ENCODE measurements at regions of chr17 and their contacts with region 1.

Region 1: GRCh38 chr17:29148790-29149430 is 31.3 kb downstream of the MYO18A start:
- DNase-seq: peak; percentile 96 to 99
- H3K4me3 ChIP-seq: peak overlapping the region; percentile 47
- H3K4me3 Mint-ChIP-seq: peak overlapping the region; percentile 69
- H3K27ac Mint-ChIP-seq: peak overlapping the region; percentile 66
- H3K4me1 ChIP-seq: peaks cover 43% of the 10 kb centered on the region
- H3K4me1 Mint-ChIP-seq: peaks cover 37% of the 10 kb centered on the region
- H3K27me3 ChIP-seq: no peaks in the 10 kb centered on the region
- H3K27me3 Mint-ChIP-seq: no peaks in the 10 kb centered on the region
- CTCF ChIP-seq: peak; percentile 97

Region 2: DNA sequence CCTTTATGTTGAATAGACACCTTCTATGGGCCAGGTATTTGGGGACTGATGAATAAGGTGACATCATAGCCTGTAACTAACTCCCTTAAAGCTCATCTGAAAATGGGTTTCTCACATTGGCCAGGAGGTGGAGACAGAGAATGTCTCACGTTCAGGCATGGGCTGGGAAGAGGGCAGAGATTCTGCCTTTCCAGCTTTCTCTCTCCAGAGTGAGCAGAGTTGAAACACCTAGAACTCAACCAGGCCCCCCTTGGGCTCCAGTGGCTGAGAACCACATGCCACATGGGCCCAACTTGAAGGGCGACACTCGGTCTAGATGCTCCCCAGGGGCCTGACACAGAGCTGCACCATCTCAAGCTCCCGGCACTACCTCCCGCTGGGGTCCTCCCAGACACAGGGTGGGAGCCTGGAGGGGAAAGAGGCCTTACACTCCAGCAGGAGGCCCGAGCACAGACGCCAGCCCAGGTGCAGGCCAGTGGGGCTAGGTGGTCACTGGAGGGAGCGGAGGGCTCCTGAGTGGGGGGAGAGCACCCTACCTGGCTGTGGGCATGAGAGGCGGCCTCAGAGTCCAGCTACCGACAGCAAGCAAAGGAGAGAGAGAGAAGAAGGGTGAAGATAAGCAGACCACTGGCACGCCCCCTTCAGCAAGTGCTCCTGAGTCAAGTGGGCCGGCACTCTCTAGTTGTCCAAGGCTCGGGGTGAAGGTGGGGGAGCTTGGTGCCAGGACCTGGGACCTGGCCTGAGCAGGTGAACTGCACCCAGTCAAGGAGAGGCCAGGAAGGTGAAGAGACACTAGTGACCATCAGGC is 24.6 kb before region 1 on chr17:
- CTCF ChIA-PET with region 1: interaction called, 47 read pairs
- POLR2A ChIA-PET with region 1: no interaction called
- intact Hi-C with region 1: loop called (anchors 1 kb)
- DNase-seq: peak; percentile 67 to 70
- H3K4me3 ChIP-seq: no peak overlapping the region
- H3K4me3 Mint-ChIP-seq: no peak overlapping the region
- H3K27ac Mint-ChIP-seq: no peak overlapping the region
- H3K4me1 ChIP-seq: no peaks in the 10 kb centered on the region
- H3K4me1 Mint-ChIP-seq: no peaks in the 10 kb centered on the region
- H3K27me3 ChIP-seq: no peaks in the 10 kb centered on the region
- H3K27me3 Mint-ChIP-seq: no peaks in the 10 kb centered on the region
- CTCF ChIP-seq: peak; percentile 65 to 81

Region 3: DNA sequence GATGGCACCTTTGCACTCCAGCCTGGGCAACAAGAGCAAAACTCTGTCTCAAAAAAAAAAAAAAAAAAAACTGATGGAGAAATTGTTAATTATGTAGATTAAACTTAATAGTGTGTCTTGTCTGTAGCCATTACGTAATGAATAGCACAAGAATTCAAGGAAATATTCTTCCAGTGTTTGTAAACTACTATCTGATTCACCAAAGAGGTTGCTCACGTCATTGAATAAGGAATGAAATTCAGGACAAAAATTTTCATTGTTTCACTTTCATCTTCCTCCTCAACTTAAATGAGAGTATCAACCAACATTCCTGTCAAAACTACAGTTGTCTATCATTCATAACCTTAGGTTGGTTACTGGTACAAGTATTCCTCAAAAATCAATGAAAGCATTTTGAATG is 62.0 kb after region 1 on chr17:
- CTCF ChIA-PET with region 1: interaction called, 10 read pairs
- POLR2A ChIA-PET with region 1: no interaction called
- intact Hi-C with region 1: no loop called
- DNase-seq: no peak
- H3K4me3 ChIP-seq: no peak overlapping the region
- H3K4me3 Mint-ChIP-seq: no peak overlapping the region
- H3K27ac Mint-ChIP-seq: no peak overlapping the region
- H3K4me1 ChIP-seq: no peaks in the 10 kb centered on the region
- H3K4me1 Mint-ChIP-seq: no peaks in the 10 kb centered on the region
- H3K27me3 ChIP-seq: no peaks in the 10 kb centered on the region
- H3K27me3 Mint-ChIP-seq: no peaks in the 10 kb centered on the region
- CTCF ChIP-seq: no peak

Region 4: DNA sequence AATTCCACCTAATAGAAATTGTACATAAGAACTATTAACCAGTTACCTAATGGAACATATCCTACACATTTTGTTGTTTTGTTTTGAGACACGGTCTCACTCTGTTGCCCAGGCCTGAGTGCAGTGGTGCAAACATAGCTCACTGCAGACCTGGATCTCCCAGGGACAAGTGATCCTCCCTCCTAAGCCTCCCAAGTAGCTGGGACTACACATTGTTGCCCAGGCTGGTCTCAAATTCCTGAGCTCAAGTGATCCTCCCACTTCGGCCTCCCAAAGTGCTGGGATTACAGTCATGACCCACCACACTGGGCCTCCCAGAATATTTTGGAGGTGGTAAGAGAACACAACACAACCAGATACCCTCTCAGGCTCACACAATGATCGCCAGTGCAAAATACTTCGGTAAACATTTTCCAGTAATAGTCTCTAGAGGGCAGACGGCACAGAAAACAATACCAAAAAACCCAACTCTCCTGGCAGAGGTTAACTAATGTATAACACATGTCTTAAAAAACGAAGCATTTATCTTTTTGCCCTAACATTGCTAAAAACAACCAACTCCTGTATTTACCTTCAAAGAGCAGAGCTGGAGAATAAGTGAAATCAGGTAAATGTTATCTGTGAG is 134.5 kb after region 1 on chr17:
- CTCF ChIA-PET with region 1: interaction called, 13 read pairs
- POLR2A ChIA-PET with region 1: no interaction called
- intact Hi-C with region 1: no loop called
- DNase-seq: no peak
- H3K4me3 ChIP-seq: no peak overlapping the region
- H3K4me3 Mint-ChIP-seq: no peak overlapping the region
- H3K27ac Mint-ChIP-seq: no peak overlapping the region
- H3K4me1 ChIP-seq: peaks cover 19% of the 10 kb centered on the region
- H3K4me1 Mint-ChIP-seq: peaks cover 25% of the 10 kb centered on the region
- H3K27me3 ChIP-seq: no peaks in the 10 kb centered on the region
- H3K27me3 Mint-ChIP-seq: no peaks in the 10 kb centered on the region
- CTCF ChIP-seq: peak in 1 of 2 experiments; percentile 21

Measured in Caco-2 (cell line).